BJ (cell line): ENCODE measurements at regions of chr3 and their contacts with region 1.

Region 1: DNA sequence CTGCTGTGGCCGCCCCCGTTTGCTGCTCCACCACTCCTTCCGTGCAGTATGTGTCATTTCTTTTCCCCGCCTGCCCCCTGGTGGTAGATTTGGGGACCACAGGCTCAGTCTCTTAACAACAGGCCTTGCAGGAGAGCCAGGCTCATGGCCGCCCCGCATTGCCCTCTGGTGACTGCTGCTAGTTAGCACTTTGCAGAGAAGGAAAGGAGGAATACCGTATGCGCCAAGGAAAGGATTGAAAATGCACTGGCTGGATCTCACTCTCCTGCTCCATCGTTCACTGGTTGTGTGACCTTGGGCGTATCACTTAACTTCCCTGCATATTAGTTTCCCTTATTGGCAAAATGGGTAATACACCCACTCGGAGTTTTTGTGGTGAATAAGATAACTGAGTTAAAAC is 39.3 kb upstream of the PXYLP1 start:
- DNase-seq: peak; percentile 47
- H3K4me3 ChIP-seq: no peak overlapping the region
- H3K27me3 ChIP-seq: peaks cover 4% of the 10 kb centered on the region; the same call in 1 of the 2 replicates
- CTCF ChIP-seq: peak; percentile 99

Region 2: GRCh38 chr3:140898340-140899180 is 293.8 kb before region 1 on chr3:
- CTCF ChIA-PET with region 1: interaction called, 10 read pairs
- POLR2A ChIA-PET with region 1: no interaction called
- DNase-seq: peak; percentile 60
- H3K4me3 ChIP-seq: no peak overlapping the region
- H3K27me3 ChIP-seq: no peaks in the 10 kb centered on the region
- CTCF ChIP-seq: peak; percentile 60

Region 3: GRCh38 chr3:141000027-141000663 is 192.2 kb before region 1 on chr3:
- CTCF ChIA-PET with region 1: interaction called, 26 read pairs
- POLR2A ChIA-PET with region 1: no interaction called
- DNase-seq: no peak
- H3K4me3 ChIP-seq: no peak overlapping the region
- H3K27me3 ChIP-seq: no peaks in the 10 kb centered on the region
- CTCF ChIP-seq: peak; percentile 72

Region 4: GRCh38 chr3:141011232-141011996 is 180.9 kb before region 1 on chr3:
- CTCF ChIA-PET with region 1: interaction called, 21 read pairs
- POLR2A ChIA-PET with region 1: no interaction called
- DNase-seq: no peak
- H3K4me3 ChIP-seq: no peak overlapping the region
- H3K27me3 ChIP-seq: no peaks in the 10 kb centered on the region
- CTCF ChIP-seq: peak; percentile 85

Region 5: DNA sequence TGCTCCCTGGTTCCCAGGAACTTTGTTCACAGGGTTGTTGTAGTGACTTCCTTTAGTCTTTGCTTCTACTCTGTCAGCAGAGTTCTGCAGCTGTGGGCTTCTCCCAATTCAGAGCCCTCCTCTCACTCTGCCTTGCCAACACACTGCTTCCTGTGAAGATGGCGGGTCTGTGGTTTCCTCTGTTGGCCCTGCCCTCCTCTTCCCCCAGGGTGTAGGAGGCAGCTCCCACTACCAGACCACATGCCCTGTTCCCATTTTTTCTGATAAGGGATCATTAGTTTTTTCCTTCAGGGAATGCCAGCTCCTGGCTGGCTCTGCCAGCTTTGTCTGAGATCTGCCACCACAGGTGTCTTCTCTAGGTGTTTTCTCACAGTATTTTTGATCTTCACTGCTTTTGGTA is 128.5 kb before region 1 on chr3:
- CTCF ChIA-PET with region 1: no interaction called
- POLR2A ChIA-PET with region 1: no interaction called
- DNase-seq: no peak
- H3K4me3 ChIP-seq: no peak overlapping the region
- H3K27me3 ChIP-seq: peaks cover 1% of the 10 kb centered on the region; the same call in 1 of the 2 replicates
- CTCF ChIP-seq: no peak

Region 6: DNA sequence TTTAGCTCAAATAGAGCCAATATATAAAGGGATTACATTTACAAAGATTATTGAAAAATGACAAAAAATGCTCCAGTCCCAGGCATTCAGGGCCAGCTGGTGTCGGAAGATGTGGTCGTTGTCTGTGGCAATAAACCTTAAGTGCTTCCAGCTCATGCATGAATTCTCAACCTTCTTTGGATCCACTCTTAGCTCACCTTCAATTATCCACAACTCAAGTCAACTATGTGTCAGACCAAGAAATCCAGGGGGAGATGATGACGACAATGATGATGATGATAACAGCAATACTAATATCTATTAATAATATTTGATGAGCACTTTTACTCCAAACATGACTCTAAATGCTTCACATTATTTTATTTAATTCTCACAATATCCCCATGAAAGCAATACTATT is 14.3 kb before region 1 on chr3:
- CTCF ChIA-PET with region 1: interaction called, 10 read pairs
- POLR2A ChIA-PET with region 1: no interaction called
- DNase-seq: no peak
- H3K4me3 ChIP-seq: no peak overlapping the region
- H3K27me3 ChIP-seq: peaks cover 2% of the 10 kb centered on the region; the same call in 1 of the 2 replicates
- CTCF ChIP-seq: no peak